ENCODE measurements at regions of chr3 and their contacts with region 1.

Region 1: GRCh38 chr3:128075516-128076482 is 23.6 kb downstream of the SEC61A1 start:
- DNase-seq: peak; percentile 91
- ATAC-seq: peak; percentile 88
- H3K4me3 Mint-ChIP-seq: peak overlapping the region; percentile 44
- H3K27ac Mint-ChIP-seq: no peak overlapping the region
- H3K4me1 Mint-ChIP-seq: peaks cover 21% of the 10 kb centered on the region
- H3K27me3 Mint-ChIP-seq: no peaks in the 10 kb centered on the region

Region 2: DNA sequence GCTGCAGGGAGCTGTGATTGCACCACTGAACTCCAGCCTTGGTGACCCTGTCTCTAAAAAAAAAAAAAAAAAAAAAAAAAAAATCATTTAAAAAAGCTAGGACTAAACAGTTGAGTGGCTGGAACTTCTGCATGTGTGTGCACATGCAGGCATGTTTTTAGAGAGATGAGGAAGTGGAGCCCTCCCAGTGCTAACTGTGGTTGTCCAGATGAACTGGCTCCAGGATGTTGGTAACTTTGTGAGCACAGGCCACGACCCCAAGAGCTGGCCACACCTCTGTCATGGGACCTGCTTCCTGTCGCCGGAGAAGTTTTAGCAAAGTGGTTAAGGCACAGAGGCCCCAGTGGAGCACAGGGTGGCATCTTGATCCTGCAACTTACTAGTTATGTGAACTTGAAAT is 1344.8 kb before region 1 on chr3:
- CTCF ChIA-PET with region 1: no interaction called
- POLR2A ChIA-PET with region 1: no interaction called
- intact Hi-C with region 1: no loop called
- DNase-seq: no peak
- ATAC-seq: no peak
- H3K4me3 Mint-ChIP-seq: no peak overlapping the region
- H3K27ac Mint-ChIP-seq: no peak overlapping the region
- H3K4me1 Mint-ChIP-seq: peaks cover 6% of the 10 kb centered on the region
- H3K27me3 Mint-ChIP-seq: no peaks in the 10 kb centered on the region

Region 3: DNA sequence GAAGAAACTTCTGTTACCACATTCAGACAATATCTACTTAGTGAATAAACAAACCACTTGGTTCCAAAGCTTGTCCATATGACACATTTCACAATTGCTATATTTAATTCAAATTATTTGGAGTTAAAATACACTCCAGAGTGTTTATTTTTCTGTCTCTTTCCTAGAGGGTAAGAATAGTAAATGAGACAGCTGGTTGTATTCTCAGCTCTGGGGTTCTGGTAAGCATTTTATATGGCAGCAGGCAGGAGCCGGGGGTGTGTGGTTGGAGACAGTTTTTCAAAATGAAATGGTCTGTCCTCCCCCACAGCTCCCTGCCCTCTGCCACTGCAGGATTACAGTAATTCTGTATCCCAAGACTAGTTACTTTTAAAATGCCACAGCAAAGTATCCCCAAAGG is 34.5 kb before region 1 on chr3:
- CTCF ChIA-PET with region 1: no interaction called
- POLR2A ChIA-PET with region 1: no interaction called
- intact Hi-C with region 1: no loop called
- DNase-seq: no peak
- ATAC-seq: no peak
- H3K4me3 Mint-ChIP-seq: no peak overlapping the region
- H3K27ac Mint-ChIP-seq: no peak overlapping the region
- H3K4me1 Mint-ChIP-seq: no peaks in the 10 kb centered on the region
- H3K27me3 Mint-ChIP-seq: peaks cover 2% of the 10 kb centered on the region

Region 4: DNA sequence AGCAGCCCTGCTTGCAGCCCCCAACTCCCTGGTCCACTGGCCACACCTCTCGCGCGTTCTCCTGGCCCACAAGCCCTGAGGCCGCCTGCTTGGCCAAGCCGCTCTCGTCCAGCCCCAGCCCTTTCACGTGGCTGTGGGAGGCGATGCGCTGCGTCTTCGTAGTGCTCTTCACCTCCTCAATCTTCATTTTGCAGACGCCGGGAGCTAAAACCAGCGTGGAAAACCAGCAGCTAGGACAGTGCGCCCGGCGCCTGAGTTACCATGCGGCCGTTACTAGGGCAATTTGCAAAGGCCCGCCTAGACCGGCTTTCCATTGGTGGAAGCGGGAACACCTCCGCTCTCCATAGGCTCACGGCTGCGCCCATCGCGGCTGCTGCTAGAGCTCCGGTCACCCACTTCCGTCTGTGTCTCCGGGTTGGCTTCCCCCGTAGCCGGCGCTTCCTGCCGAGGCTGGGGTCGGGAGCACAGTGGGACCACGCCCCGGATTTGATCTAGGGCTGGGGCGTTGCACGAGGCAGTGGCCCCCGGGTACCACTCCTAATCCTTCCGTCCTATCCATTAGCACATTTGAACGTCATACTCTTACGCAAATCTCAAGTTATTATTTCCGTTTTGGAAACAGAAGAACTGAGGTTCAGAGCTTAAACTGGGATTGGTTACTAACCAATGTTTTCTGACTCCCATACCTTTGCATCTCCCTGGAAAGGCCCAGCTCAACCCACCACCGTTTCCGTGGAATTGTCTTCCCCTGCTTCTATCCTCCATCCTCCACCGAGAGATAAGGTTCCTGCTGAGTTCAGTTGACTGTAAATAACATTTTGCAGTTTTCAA is 48.0 kb after region 1 on chr3 and contains the start of gene RUVBL1:
- CTCF ChIA-PET with region 1: interaction called, 8 read pairs
- POLR2A ChIA-PET with region 1: no interaction called
- intact Hi-C with region 1: loop called (anchors 1 to 2 kb)
- DNase-seq: peak; percentile 99
- ATAC-seq: peak; percentile 99
- H3K4me3 Mint-ChIP-seq: peak within 1 kb of the TSS; percentile 99
- H3K27ac Mint-ChIP-seq: peak within 1 kb of the TSS; percentile 96
- H3K4me1 Mint-ChIP-seq: peaks cover 30% of the 10 kb centered on the region
- H3K27me3 Mint-ChIP-seq: no peaks in the 10 kb centered on the region
- total RNA-seq, gene RUVBL1: 97.0 to 99.9 TPM

Region 5: GRCh38 chr3:128153156-128154041 is 77.6 kb after region 1 on chr3 and contains the start of gene EEFSEC:
- CTCF ChIA-PET with region 1: no interaction called
- POLR2A ChIA-PET with region 1: no interaction called
- intact Hi-C with region 1: loop called in 1 of 2 experiments (anchors 1 kb)
- DNase-seq: peak; percentile 91
- ATAC-seq: peak; percentile 95
- H3K4me3 Mint-ChIP-seq: peak within 1 kb of the TSS; percentile 80
- H3K27ac Mint-ChIP-seq: peak within 1 kb of the TSS; percentile 85
- H3K4me1 Mint-ChIP-seq: peaks cover 25% of the 10 kb centered on the region
- H3K27me3 Mint-ChIP-seq: no peaks in the 10 kb centered on the region
- total RNA-seq, gene EEFSEC: 19.6 to 20.7 TPM

Region 6: GRCh38 chr3:128322066-128323022 is 246.5 kb after region 1 on chr3:
- CTCF ChIA-PET with region 1: no interaction called
- POLR2A ChIA-PET with region 1: no interaction called
- intact Hi-C with region 1: loop called (anchors 5 kb)
- DNase-seq: peak; percentile 76
- ATAC-seq: peak; percentile 75
- H3K4me3 Mint-ChIP-seq: no peak overlapping the region
- H3K27ac Mint-ChIP-seq: no peak overlapping the region
- H3K4me1 Mint-ChIP-seq: peaks cover 51% of the 10 kb centered on the region
- H3K27me3 Mint-ChIP-seq: no peaks in the 10 kb centered on the region

Region 7: DNA sequence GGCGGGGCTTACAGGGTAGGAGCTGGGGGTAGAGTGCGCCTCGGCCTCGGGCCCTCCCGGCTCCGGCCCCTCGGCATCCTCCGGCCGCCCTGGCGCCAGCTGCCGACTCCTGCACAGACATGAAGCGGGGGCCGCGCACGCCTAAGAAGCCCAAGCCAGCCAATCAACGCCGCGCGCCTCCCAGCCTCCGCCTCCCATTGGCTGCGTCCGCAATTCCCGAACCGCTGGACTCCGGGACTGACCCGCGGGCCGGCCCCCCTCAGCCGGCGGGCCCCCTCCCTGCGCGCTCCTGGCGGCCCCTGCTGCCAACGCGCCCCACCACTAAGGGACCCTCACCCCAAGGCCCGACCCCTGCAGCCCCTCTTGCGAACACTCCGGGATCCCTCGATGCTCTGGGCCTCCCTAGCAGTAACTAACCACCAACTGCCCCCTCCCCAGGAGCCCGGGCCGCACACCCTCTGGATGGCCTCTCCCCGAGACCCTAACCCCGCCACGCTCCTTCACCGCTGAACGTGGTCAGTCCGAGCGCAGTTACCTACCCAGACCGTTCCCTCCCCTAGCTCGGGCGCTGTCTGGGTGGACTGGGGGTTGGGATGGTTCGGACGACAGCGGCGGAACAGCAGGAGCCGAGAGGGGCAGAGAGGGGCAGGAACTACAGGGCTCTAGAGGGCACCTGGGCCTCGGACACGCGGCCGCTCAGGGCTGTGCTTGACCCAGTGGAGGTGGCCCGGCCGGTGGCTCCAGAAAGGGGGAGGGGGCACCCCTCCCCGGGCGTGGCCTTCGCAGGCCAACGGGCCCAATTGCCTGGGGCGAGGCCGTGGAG is 412.2 kb after region 1 on chr3:
- CTCF ChIA-PET with region 1: interaction called, 5 read pairs
- POLR2A ChIA-PET with region 1: no interaction called
- intact Hi-C with region 1: loop called in 1 of 2 experiments (anchors 5 kb)
- DNase-seq: peak; percentile 64
- ATAC-seq: peak; percentile 49
- H3K4me3 Mint-ChIP-seq: peak overlapping the region; percentile 70
- H3K27ac Mint-ChIP-seq: no peak overlapping the region
- H3K4me1 Mint-ChIP-seq: peaks cover 31% of the 10 kb centered on the region
- H3K27me3 Mint-ChIP-seq: peaks cover 63% of the 10 kb centered on the region

Region 8: GRCh38 chr3:128607710-128608048 is 531.9 kb after region 1 on chr3:
- CTCF ChIA-PET with region 1: interaction called, 3 read pairs
- POLR2A ChIA-PET with region 1: no interaction called
- intact Hi-C with region 1: loop called (anchors 5 to 10 kb)
- DNase-seq: no peak
- ATAC-seq: no peak
- H3K4me3 Mint-ChIP-seq: no peak overlapping the region
- H3K27ac Mint-ChIP-seq: no peak overlapping the region
- H3K4me1 Mint-ChIP-seq: no peaks in the 10 kb centered on the region
- H3K27me3 Mint-ChIP-seq: no peaks in the 10 kb centered on the region

Measured in activated CD4-positive, alpha-beta T cell treated with anti-CD3 and anti-CD28 coated beads for 36 hours (primary cell).